GM12878 (cell line): ENCODE measurements at regions of chr12 and their contacts with region 1.

Region 1: GRCh38 chr12:38906482-38907170 is 1.2 kb upstream of the CPNE8 start:
- DNase-seq: peak; percentile 56
- ATAC-seq: peak; percentile 71
- H3K4me3 ChIP-seq: peak overlapping the region; percentile 82
- H3K27ac ChIP-seq: peak overlapping the region; percentile 95
- H3K4me1 ChIP-seq: no peaks in the 10 kb centered on the region; the same call in 1 of the 2 replicates
- H3K27me3 ChIP-seq: no peaks in the 10 kb centered on the region
- CTCF ChIP-seq: peak; percentile 88 to 92 (median 89)
- EP300 ChIP-seq: 0 out of 4 replicates have a peak, but pooled peaks of 1 of the 2 experiments have one; percentile 17
- POLR2A ChIP-seq: peak; percentile 78
- RAD21 ChIP-seq: peak; percentile 82

Region 2: DNA sequence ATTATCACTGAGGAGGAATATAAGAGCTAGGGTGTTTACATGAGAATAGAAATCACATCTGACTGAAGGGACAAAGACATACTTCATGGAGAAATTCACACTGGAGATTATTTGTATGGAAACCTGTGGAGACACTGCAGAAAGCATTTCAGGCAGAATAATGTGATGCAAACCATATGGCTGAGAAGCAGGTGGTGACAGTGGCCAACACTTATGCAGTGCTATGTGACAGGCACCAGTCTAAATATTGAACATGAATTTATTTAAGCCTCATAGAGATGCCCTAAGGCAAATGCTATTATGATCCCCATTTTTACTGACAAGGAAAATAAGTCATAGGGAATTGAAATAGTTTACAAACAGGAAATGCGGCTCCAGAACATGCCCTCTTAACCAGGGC is 573.8 kb before region 1 on chr12:
- CTCF ChIA-PET with region 1: interaction called, 24 read pairs
- POLR2A ChIA-PET with region 1: no interaction called
- RAD21 ChIA-PET with region 1: interaction called, 17 read pairs
- SMC1A ChIA-PET with region 1: interaction called, 12 read pairs
- in situ Hi-C with region 1: no loop called
- intact Hi-C with region 1: loop called (anchors 5 kb)
- DNase-seq: no peak
- ATAC-seq: no peak
- H3K4me3 ChIP-seq: no peak overlapping the region
- H3K27ac ChIP-seq: no peak overlapping the region
- H3K4me1 ChIP-seq: no peaks in the 10 kb centered on the region
- H3K27me3 ChIP-seq: no peaks in the 10 kb centered on the region
- CTCF ChIP-seq: no peak
- EP300 ChIP-seq: no peak
- POLR2A ChIP-seq: no peak
- RAD21 ChIP-seq: no peak

Region 3: GRCh38 chr12:38664661-38665269 is 241.9 kb before region 1 on chr12:
- CTCF ChIA-PET with region 1: interaction called, 68 read pairs
- POLR2A ChIA-PET with region 1: no interaction called
- RAD21 ChIA-PET with region 1: interaction called, 32 read pairs
- SMC1A ChIA-PET with region 1: interaction called, 41 read pairs
- in situ Hi-C with region 1: no loop called
- intact Hi-C with region 1: loop called (anchors 1 kb)
- DNase-seq: peak; percentile 15
- ATAC-seq: peak; percentile 94
- H3K4me3 ChIP-seq: no peak overlapping the region
- H3K27ac ChIP-seq: no peak overlapping the region
- H3K4me1 ChIP-seq: no peaks in the 10 kb centered on the region
- H3K27me3 ChIP-seq: no peaks in the 10 kb centered on the region
- CTCF ChIP-seq: peak; percentile 58 to 65 (median 61)
- EP300 ChIP-seq: no peak
- POLR2A ChIP-seq: no peak
- RAD21 ChIP-seq: peak; percentile 63

Region 4: GRCh38 chr12:38831715-38832114 is 74.9 kb before region 1 on chr12:
- CTCF ChIA-PET with region 1: interaction called, 9 read pairs
- POLR2A ChIA-PET with region 1: no interaction called
- RAD21 ChIA-PET with region 1: interaction called, 6 read pairs
- SMC1A ChIA-PET with region 1: interaction called, 7 read pairs
- in situ Hi-C with region 1: no loop called
- intact Hi-C with region 1: loop called (anchors 5 kb)
- DNase-seq: no peak
- ATAC-seq: no peak
- H3K4me3 ChIP-seq: no peak overlapping the region
- H3K27ac ChIP-seq: no peak overlapping the region
- H3K4me1 ChIP-seq: no peaks in the 10 kb centered on the region
- H3K27me3 ChIP-seq: no peaks in the 10 kb centered on the region
- CTCF ChIP-seq: no peak
- EP300 ChIP-seq: no peak
- POLR2A ChIP-seq: no peak
- RAD21 ChIP-seq: no peak

Region 5: DNA sequence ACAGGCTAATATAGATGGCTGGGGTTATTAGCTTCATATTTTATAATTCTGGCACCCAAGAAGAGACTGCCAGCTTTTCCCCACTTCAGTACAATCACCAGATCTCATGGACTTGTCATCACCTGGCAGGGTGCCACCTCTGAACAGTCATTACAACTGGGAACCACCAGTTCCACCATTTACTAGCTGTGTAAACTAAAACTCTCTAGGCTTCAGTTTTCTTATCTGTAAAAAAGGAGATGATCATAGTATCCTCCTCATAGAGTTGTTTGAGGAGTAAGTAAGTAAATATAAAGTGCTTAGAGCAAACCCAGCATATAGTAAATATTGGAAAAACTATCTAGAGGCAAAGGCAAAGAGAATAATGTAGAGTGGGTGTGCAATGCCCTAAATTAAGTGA is 20.6 kb before region 1 on chr12:
- CTCF ChIA-PET with region 1: interaction called, 23 read pairs
- POLR2A ChIA-PET with region 1: interaction called, 5 read pairs
- RAD21 ChIA-PET with region 1: interaction called, 170 read pairs
- SMC1A ChIA-PET with region 1: interaction called, 38 read pairs
- in situ Hi-C with region 1: no loop called
- intact Hi-C with region 1: no loop called
- DNase-seq: no peak
- ATAC-seq: peak; percentile 47
- H3K4me3 ChIP-seq: no peak overlapping the region
- H3K27ac ChIP-seq: no peak overlapping the region
- H3K4me1 ChIP-seq: no peaks in the 10 kb centered on the region
- H3K27me3 ChIP-seq: no peaks in the 10 kb centered on the region
- CTCF ChIP-seq: no peak
- EP300 ChIP-seq: no peak
- POLR2A ChIP-seq: no peak
- RAD21 ChIP-seq: no peak

Region 6: GRCh38 chr12:39095636-39096330 is 189.2 kb after region 1 on chr12:
- CTCF ChIA-PET with region 1: interaction called, 10 read pairs
- POLR2A ChIA-PET with region 1: no interaction called
- RAD21 ChIA-PET with region 1: no interaction called
- SMC1A ChIA-PET with region 1: no interaction called
- in situ Hi-C with region 1: no loop called
- intact Hi-C with region 1: no loop called
- DNase-seq: no peak
- ATAC-seq: no peak
- H3K4me3 ChIP-seq: no peak overlapping the region
- H3K27ac ChIP-seq: no peak overlapping the region
- H3K4me1 ChIP-seq: no peaks in the 10 kb centered on the region
- H3K27me3 ChIP-seq: no peaks in the 10 kb centered on the region
- CTCF ChIP-seq: peak in 1 of 3 experiments; percentile 18; a peak in 1 of 6 replicates
- EP300 ChIP-seq: no peak
- POLR2A ChIP-seq: no peak
- RAD21 ChIP-seq: no peak